A549 (cell line): ENCODE measurements at regions of chr17 and their contacts with region 1.

Region 1: GRCh38 chr17:7177196-7177953 is 1.8 kb downstream of the ASGR1 start:
- DNase-seq: peak; percentile 72 to 95
- ATAC-seq: peak; percentile 84 to 92
- H3K4me3 ChIP-seq: peak overlapping the region; percentile 54
- H3K27ac ChIP-seq: peak overlapping the region; percentile 67 to 88
- H3K4me1 ChIP-seq: peaks cover 23% of the 10 kb centered on the region
- CTCF ChIP-seq: peak; percentile 88
- EP300 ChIP-seq: no peak
- POLR2A ChIP-seq: no peak
- RAD21 ChIP-seq: peak; percentile 90 to 94

Region 2: DNA sequence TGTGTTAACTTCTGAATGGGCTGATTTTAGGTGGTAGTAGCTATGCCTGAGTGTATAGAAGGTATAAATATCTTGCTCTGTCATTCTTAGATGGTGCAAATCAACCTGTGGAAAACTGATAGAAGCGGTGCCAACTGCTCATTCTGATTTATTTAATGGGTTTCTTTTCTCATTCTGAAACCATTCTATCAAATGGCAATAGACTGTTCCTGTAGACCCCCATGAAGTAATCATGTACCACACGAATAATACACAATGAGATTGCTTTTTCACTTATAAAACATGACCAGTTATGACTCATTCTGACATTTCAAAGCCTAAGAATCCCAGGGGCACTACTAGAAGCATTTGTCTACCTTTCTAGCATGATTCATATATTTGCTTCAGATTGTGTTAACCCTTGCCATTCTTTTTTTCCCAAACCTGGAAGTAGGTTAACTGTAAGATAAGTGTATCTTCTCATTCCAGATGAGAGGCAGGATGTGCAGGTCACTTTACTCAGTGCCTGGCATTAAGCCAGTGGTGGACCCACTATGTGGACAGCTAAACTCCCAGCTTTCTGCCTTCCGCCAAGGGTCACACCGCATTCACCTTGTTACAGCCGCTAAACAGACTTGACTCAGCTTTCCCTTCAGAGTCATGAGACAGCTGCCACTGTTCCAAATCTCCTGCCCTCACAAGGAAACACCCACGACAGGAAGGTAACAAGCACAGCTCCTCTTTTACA is 117.0 kb before region 1 on chr17:
- CTCF ChIA-PET with region 1: interaction called, 314 read pairs
- POLR2A ChIA-PET with region 1: interaction called, 4 read pairs
- DNase-seq: peak; percentile 96 to 98
- ATAC-seq: peak; percentile 90 to 96
- H3K4me3 ChIP-seq: no peak overlapping the region
- H3K27ac ChIP-seq: peak overlapping the region; percentile 79 to 91
- H3K4me1 ChIP-seq: peaks cover 51% of the 10 kb centered on the region
- CTCF ChIP-seq: no peak
- EP300 ChIP-seq: peak; percentile 53 to 70; a peak in 2 of 5 replicates
- POLR2A ChIP-seq: no peak
- RAD21 ChIP-seq: peak; percentile 7 to 29; a peak in 2 of 5 replicates

Region 3: DNA sequence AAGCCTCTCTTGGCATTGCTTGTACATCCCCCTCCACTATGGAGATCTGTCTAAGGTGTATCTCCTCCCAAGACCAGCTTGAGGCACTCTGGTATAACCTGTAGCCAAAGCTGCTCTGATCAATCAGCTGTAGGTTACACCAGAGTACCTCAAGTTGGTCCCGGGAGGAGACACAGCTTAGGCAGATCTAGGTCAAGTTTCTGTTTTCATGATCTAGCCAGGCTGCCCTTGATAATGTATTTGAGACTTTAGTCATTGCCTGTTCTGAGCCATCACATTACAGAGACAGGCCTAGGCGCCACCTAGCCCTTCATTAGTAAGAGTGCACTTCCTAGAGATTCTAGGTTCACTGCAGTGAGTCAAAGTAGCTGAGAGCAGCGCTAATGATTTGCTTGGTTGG is 29.6 kb before region 1 on chr17:
- CTCF ChIA-PET with region 1: interaction called, 31 read pairs
- POLR2A ChIA-PET with region 1: no interaction called
- DNase-seq: no peak
- ATAC-seq: peak; percentile 71 to 83
- H3K4me3 ChIP-seq: no peak overlapping the region
- H3K27ac ChIP-seq: no peak overlapping the region
- H3K4me1 ChIP-seq: no peaks in the 10 kb centered on the region
- CTCF ChIP-seq: no peak
- EP300 ChIP-seq: no peak
- POLR2A ChIP-seq: no peak
- RAD21 ChIP-seq: no peak

Region 4: GRCh38 chr17:7191571-7192270 is 14.3 kb after region 1 on chr17:
- CTCF ChIA-PET with region 1: interaction called, 50 read pairs
- POLR2A ChIA-PET with region 1: no interaction called
- DNase-seq: peak; percentile 51 to 82
- ATAC-seq: peak; percentile 84 to 91
- H3K4me3 ChIP-seq: no peak overlapping the region
- H3K27ac ChIP-seq: no peak overlapping the region
- H3K4me1 ChIP-seq: no peaks in the 10 kb centered on the region
- CTCF ChIP-seq: no peak
- EP300 ChIP-seq: no peak
- POLR2A ChIP-seq: no peak
- RAD21 ChIP-seq: no peak

Region 5: DNA sequence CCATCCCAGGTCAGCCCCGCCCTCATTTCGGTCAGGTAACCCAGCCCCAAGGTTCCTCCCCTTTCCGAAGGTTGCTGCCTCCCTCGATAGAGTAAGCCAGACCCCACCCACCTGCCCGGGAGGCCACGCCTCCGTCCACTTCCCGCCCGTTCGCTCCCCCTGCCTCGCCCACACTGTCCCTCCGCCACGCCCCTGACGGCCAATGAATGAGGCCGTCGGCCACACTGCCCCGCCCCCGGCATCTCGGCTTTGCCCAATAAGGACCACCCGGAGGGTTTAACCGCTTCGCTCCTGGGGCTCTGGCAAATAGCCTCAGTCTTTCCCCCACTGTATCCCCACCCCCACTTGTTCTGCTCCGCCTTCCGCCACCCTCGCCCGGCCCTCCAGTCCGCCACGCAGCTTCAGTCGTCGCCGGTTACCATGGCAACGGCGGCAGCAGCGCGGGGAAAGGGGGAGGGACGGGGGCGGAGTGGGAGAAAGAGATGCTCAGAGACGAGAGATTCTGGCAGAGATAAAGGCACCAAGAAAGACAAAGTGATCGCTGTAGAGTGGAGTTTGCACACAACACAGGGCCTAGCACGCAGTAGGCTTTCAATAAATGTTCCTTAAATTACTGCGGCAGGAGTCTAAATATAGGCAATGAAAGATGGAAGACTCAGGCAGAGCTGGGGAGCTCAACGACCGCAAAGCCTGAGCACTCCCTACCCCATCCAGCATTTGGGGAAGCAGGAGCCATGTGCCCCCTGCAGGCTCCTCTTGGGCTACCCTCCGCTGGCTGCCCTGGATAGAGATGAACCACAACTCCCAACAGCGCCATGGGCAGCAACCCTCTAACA is 37.1 kb after region 1 on chr17:
- CTCF ChIA-PET with region 1: interaction called, 20 read pairs
- POLR2A ChIA-PET with region 1: interaction called, 5 read pairs
- DNase-seq: peak; percentile 99 to 100
- ATAC-seq: peak; percentile 75 to 89
- H3K4me3 ChIP-seq: peak overlapping the region; percentile 47
- H3K27ac ChIP-seq: peak overlapping the region; percentile 61 to 79
- H3K4me1 ChIP-seq: peaks cover 43% of the 10 kb centered on the region
- CTCF ChIP-seq: peak; percentile 53
- EP300 ChIP-seq: no peak
- POLR2A ChIP-seq: no peak
- RAD21 ChIP-seq: peak; percentile 34 to 42; a peak in 2 of 5 replicates

Region 6: DNA sequence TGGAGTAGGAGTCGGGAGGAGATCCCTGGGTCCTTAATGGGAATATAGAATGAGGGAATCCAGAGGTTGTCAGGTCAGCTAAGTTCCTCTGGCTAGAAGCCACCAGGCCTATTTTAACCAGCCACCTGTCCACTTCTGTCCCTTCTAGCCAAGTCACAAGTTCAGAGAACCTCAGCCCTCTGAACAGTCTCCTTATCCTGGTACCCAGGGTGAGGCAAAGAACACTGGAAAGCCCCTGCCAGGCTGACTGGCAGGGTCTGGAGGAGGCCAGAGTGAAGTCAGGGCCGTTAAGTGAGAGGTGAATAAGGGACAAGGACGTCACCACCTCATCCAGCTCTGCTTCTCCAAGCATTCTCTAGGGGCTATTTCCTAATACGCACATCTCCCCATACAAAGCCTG is 71.4 kb after region 1 on chr17:
- CTCF ChIA-PET with region 1: no interaction called
- POLR2A ChIA-PET with region 1: no interaction called
- DNase-seq: no peak
- ATAC-seq: no peak
- H3K4me3 ChIP-seq: no peak overlapping the region
- H3K27ac ChIP-seq: peak overlapping the region in 1 of 2 experiments; percentile 2; a peak in 1 of 6 replicates
- H3K4me1 ChIP-seq: peaks cover 26% of the 10 kb centered on the region
- CTCF ChIP-seq: no peak
- EP300 ChIP-seq: no peak
- POLR2A ChIP-seq: no peak
- RAD21 ChIP-seq: no peak